Common myeloid progenitor, CD34-positive (primary cell): ENCODE measurements at regions of chr3 and their contacts with region 1.

Region 1: DNA sequence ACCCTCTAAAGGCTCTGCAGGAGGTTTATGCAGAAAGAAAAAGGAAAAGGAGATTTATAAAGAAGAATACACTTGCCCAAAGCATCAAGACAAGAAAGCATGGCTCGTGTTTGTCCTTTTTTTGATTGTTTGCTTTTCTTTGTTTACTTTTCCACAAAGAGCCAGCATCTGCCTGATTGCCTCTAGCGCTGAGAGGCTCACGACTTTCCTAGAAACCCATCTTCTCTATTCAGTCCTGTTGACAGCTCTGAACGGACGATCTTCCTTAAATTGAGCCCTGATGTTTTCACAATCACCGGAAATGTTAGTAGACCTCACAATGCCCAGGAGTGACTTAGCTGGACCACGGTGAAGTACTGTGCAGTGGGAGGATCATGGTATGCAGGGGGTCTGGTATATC is 12.4 kb downstream of the GP5 start:
- DNase-seq: no peak
- H3K4me3 ChIP-seq: no peak overlapping the region
- H3K27ac ChIP-seq: no peak overlapping the region
- H3K4me1 ChIP-seq: no peaks in the 10 kb centered on the region
- H3K27me3 ChIP-seq: peaks cover 0 to 12% (median 0%) of the 10 kb centered on the region in 5 experiments

Region 2: GRCh38 chr3:194404365-194405140 is 17.9 kb after region 1 on chr3:
- CTCF ChIA-PET with region 1: no interaction called
- POLR2A ChIA-PET with region 1: interaction called, 11 read pairs
- DNase-seq: peak; percentile 60 to 76 (median 67)
- H3K4me3 ChIP-seq: no peak overlapping the region
- H3K27ac ChIP-seq: no peak overlapping the region
- H3K4me1 ChIP-seq: peaks cover under 1 to 7% (median 6%) of the 10 kb centered on the region in 4 experiments
- H3K27me3 ChIP-seq: peaks cover 0 to 7% (median 0%) of the 10 kb centered on the region in 5 experiments